Heart right ventricle (tissue), 16 donors: ENCODE measurements at regions of chr12 and their contacts with region 1.

Region 1: DNA sequence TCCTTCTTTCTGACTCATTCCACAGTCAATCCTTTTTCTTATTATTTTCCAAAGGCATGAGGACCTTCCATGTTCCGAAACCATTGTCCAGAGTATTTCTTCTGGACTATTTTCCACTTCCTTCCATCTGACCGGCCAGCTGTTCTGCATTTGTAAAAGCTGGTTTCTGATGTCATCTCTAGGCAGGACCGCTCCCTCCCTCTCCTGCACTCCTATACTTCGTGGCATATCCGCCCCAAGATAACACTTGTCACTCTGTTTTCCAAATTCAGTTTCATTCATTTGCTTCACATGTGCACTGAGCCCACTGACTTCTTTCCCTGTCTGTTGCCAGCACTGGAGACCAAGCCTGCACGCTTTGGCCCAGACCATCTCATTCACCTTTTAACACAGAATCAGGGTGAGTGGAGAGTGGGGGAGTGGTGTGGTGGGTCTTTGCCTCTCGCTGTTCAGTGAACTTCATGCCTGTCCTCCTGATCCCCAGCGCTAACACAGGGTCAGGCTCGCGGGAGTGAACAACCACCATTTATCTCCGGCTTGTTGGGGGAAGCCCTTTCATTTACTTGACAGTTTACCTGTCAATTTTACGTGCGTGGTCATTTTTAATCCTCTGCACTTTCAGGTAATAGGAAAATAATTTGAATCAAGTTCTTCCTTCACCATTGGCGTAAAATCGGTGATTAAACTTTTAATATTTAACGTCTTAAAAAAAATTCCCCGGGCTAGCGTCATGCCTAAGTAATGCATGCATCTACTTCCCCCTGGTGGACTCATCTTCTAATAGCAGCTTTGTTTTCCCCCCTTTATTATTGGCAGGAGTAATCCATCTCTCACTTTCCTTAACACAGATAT is 52.5 kb downstream of the C12orf75 start:
- DNase-seq: peak in 1 of 2 donors; percentile 46
- ATAC-seq: peak in 7 of 8 donors; percentile 70 to 83 (median 75)
- H3K4me3 ChIP-seq: peak overlapping the region in 6 of 10 donors; percentile 25 to 46 (median 34)
- H3K27ac ChIP-seq: no peak overlapping the region
- H3K4me1 ChIP-seq: peaks cover 0 to 10% (median 4%) of the 10 kb centered on the region in 9 donors
- H3K27me3 ChIP-seq: peaks cover 0 to 18% (median 0%) of the 10 kb centered on the region in 7 donors
- CTCF ChIP-seq: peak; percentile 68 to 86 (median 78)

Region 2: DNA sequence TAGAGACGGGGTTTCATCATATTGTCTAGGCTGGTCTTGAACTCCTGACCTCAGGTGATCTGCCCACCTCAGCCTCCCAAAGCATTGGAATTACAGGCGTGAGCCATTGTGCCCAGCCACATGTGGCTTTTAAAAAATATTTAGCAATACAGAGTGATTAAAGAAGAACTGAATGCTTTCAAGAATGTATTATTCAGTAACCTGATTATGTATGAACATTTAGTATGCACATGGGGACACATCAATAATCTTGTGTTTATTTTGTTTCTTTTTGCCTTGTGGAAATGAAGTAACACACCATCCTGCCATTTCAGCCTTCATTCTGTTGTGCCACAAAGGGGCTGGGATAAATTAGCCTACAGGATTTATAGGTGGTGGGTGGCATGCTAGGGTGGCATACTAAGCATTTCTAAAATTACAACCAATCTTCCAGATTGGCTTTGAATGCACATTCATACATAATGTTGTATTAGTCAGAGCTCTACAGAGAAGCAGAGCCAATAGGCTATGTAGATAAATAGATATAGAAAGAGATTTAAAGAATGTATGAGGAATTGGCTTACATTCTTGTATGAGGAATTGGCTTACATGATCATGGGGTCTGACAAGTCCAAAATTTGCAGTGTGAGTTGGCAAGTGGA is 1193.0 kb before region 1 on chr12:
- intact Hi-C with region 1: loop called in 1 of 10 experiments (anchors 10 kb)
- DNase-seq: no peak
- ATAC-seq: no peak
- H3K4me3 ChIP-seq: no peak overlapping the region
- H3K27ac ChIP-seq: no peak overlapping the region
- H3K4me1 ChIP-seq: no peaks in the 10 kb centered on the region
- H3K27me3 ChIP-seq: no peaks in the 10 kb centered on the region
- CTCF ChIP-seq: no peak

Region 3: DNA sequence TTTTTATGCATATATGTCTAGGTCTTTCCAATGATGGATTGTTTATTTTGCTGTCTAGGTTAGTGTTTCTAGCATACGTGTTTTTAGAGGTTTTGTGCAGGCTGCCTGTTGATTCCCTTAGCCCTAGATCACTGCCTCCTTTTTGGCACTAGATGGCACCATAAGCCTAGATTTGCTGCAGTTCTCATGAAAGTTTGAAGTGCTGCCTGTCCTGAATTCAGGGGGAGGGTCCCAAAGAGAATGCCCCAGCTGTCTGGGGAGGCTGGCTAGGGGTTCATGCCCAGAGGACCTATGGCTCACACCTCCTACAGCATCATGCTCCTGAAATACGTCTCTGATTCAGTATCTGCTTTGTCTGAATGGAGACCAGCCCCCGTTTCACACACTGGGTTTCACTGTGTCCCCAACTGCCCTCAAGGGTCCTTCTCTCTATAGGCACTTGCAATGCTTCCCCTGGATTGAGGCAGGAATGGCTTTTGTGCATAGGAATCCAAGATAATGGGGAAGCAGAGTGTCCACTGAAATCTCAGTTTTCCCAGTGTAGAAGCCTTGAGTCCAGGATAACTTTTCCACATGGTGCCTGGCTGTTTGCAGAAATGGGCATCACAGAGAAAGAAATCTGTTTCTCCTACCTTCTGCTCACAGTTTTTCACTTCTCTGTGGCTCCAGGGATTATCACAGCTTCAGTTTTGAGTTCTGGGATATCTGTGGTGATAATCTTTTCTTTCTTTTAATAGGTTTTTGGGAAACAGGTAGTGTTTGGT is 1181.6 kb before region 1 on chr12:
- intact Hi-C with region 1: loop called in 2 of 10 experiments (anchors 10 kb)
- DNase-seq: peak in 1 of 2 donors; percentile 47
- ATAC-seq: peak; percentile 59 to 87 (median 76)
- H3K4me3 ChIP-seq: no peak overlapping the region
- H3K27ac ChIP-seq: no peak overlapping the region
- H3K4me1 ChIP-seq: no peaks in the 10 kb centered on the region
- H3K27me3 ChIP-seq: no peaks in the 10 kb centered on the region
- CTCF ChIP-seq: peak; percentile 60 to 89 (median 85)

Region 4: DNA sequence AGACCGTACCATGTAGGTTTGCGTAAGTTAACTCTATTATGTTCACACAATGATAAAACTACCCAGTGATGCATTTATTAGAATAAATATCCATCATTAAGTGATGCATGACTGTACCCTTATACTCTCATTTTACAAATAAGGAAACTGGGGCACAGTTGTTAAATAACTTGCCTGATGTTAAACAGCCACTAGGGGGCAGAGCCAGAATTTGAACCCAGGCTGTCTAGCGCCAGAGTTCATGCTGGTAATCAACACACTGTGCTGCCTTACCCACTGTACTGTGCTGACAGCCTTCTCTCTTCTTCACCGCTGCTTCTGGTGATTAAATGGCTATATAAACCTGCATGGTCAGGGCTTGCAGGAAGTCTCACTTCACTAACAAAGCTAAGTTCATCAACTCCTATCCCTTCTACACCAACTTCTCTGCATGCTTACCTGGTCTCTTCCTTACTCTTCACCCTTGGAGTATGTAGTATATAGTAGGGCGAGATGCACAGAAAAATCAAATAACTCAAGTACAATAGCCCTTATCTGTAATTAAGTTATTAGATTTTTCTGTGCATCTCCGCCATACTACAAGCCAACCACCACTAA is 103.4 kb before region 1 on chr12:
- intact Hi-C with region 1: loop called in 9 of 10 experiments (anchors 1 to 10 kb)
- DNase-seq: peak in 1 of 2 donors; percentile 24
- ATAC-seq: peak in 4 of 8 donors; percentile 39 to 71 (median 49)
- H3K4me3 ChIP-seq: no peak overlapping the region
- H3K27ac ChIP-seq: no peak overlapping the region
- H3K4me1 ChIP-seq: no peaks in the 10 kb centered on the region
- H3K27me3 ChIP-seq: peaks cover 0 to 17% (median 0%) of the 10 kb centered on the region in 7 donors
- CTCF ChIP-seq: peak; percentile 15 to 75 (median 65)

Region 5: GRCh38 chr12:105296116-105297089 is 86.6 kb before region 1 on chr12:
- intact Hi-C with region 1: no loop called
- DNase-seq: no peak
- ATAC-seq: no peak
- H3K4me3 ChIP-seq: no peak overlapping the region
- H3K27ac ChIP-seq: no peak overlapping the region
- H3K4me1 ChIP-seq: no peaks in the 10 kb centered on the region
- H3K27me3 ChIP-seq: peaks cover 0 to 13% (median 0%) of the 10 kb centered on the region in 7 donors
- CTCF ChIP-seq: no peak

Region 6: DNA sequence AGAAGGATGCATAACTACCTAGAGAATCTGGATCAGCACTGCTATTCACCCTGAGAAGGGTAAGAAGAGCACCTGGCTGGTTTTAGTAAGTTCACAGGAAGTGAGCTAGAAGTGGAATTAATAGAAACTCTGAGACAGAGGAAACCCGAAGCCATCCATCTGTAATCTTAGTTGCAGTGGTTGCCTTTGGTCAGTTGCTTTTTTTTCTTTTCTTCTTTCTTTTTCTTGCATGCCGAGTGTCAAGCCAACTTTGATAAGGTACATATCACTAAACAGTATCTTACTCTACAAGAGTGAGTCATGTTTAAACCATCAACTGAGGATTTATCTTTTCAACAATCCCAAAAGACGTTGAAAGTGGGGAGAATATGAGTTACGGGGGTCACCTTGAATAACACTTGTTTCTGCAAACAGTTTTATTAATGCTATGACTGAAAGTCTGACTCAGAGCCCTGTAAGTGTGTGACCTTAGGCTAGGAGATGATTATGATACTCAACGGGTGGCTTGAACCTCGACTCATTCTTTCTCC is 25.8 kb before region 1 on chr12:
- intact Hi-C with region 1: no loop called
- DNase-seq: no peak
- ATAC-seq: no peak
- H3K4me3 ChIP-seq: no peak overlapping the region
- H3K27ac ChIP-seq: no peak overlapping the region
- H3K4me1 ChIP-seq: peaks cover 0 to 11% (median 9%) of the 10 kb centered on the region in 9 donors
- H3K27me3 ChIP-seq: no peaks in the 10 kb centered on the region
- CTCF ChIP-seq: no peak

Region 7: GRCh38 chr12:105562199-105562971 is 179.4 kb after region 1 on chr12:
- intact Hi-C with region 1: no loop called
- DNase-seq: peak; percentile 15 to 31
- ATAC-seq: peak in 7 of 8 donors; percentile 49 to 82 (median 68)
- H3K4me3 ChIP-seq: no peak overlapping the region
- H3K27ac ChIP-seq: peak overlapping the region in 1 of 10 donors; percentile 29
- H3K4me1 ChIP-seq: peaks cover 0 to 11% (median 7%) of the 10 kb centered on the region in 9 donors
- H3K27me3 ChIP-seq: no peaks in the 10 kb centered on the region
- CTCF ChIP-seq: no peak